Heart right ventricle (tissue), 16 donors: ENCODE measurements at regions of chr2 and their contacts with region 1.

Region 1: DNA sequence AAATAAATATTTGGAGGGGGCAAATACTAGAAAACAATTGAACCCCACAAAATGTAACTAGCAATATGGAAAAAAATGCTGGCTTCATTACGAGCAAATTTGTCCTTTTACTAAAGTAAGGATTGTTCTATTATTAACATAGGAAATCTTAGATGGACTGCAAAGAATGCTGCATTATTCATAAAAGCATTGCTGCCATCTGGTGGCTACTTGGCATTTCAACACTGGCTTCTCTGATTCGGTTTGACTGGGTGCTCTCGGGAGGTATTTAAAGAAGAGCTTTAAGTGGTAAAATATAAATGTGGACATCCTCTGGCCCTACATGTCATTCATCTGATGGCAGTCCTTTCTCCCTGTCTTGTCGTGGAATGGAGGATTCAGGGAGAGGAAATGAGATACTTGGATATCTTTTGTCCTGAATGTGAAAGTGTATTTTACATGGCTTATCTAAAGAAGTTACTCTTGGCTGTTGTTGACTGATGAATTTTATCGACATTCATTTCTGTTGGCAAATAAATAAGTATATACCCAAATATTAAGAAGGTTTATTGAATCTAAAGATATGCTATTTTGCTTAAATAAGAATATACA is 130.2 kb downstream of the ARHGAP15 start:
- DNase-seq: peak in 1 of 2 donors; percentile 61
- ATAC-seq: peak in 4 of 8 donors; percentile 61 to 81 (median 68)
- H3K4me3 ChIP-seq: peak overlapping the region in 1 of 10 donors; percentile 6
- H3K27ac ChIP-seq: peak overlapping the region in 1 of 10 donors; percentile 63
- H3K4me1 ChIP-seq: peaks cover 0 to 36% (median 0%) of the 10 kb centered on the region in 9 donors
- H3K27me3 ChIP-seq: peaks cover 0 to 3% (median 0%) of the 10 kb centered on the region in 7 donors
- CTCF ChIP-seq: peak; percentile 30 to 80 (median 70)

Region 2: DNA sequence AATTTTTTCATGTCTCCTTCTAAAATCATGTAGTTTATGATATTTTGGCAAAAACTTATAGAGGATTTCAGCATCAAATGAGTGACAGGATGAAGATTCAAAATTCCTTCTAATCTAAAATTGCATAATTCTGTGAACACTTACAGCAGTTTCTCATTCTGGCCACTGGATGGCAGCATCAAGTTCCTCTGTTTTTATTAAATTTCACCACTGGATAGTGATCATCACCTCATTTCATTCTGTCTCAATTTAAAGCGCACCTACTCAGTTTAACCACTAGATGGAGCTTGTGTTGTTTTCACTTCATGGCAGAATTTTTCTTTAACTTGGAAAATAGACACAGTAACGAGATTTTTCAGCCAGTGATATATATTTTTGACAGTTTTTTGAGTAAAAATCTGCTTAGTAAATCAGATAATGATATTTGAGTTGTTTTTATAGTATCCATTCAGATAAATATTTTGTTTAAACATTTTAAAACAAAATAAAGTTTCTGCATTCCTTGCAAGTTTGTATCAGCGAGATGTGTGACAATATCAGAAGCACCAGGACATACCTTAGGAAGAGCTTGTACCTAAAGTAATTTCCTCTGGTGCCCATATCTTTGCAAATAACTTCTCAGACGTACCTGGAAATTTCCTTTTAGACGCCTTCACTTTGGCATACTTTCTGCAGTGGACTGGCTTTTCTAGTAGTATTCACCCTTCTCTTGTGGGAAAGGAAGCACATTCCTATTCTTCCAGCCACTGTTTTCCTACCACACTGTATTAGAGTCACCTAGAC is 225.0 kb before region 1 on chr2:
- intact Hi-C with region 1: loop called in 3 of 10 experiments (anchors 5 to 10 kb)
- DNase-seq: peak in 1 of 2 donors; percentile 52
- ATAC-seq: peak in 7 of 8 donors; percentile 55 to 79 (median 70)
- H3K4me3 ChIP-seq: no peak overlapping the region
- H3K27ac ChIP-seq: no peak overlapping the region
- H3K4me1 ChIP-seq: no peaks in the 10 kb centered on the region
- H3K27me3 ChIP-seq: peaks cover 0 to 7% (median 0%) of the 10 kb centered on the region in 7 donors
- CTCF ChIP-seq: peak; percentile 81 to 99 (median 97)

Region 3: DNA sequence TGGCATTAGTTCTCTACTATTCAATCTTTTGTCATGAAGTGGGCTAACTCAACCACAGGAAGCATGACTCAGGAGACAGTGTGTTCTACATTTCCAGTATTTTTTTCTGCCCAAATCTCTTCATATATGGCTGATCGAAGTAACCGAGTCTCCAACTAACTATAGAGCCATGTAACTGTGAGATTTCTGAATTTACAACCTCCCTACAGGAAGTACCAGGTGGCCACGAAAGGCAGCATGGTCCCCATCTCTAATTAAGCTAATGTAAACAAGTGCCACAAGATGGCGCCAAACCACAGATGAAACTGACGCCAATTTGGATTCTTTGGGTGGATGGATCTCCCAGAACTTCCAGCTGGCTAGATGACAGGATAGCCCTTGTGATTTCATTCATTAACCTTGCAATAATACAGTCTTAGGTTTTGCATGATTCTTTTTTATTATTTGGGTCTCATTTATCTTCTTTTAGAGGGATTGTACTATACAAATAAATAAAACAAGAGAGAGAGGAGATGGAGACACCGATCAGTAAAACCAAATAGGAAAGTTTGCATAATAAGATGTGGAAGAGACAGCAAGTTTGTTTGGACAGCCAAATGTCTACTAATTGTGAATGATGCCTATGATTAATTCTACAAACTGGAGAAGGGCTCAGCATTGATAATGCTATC is 148.6 kb before region 1 on chr2:
- intact Hi-C with region 1: loop called in 6 of 10 experiments (anchors 2 to 10 kb)
- DNase-seq: peak; percentile 14 to 58
- ATAC-seq: peak in 6 of 8 donors; percentile 37 to 70 (median 48)
- H3K4me3 ChIP-seq: no peak overlapping the region
- H3K27ac ChIP-seq: no peak overlapping the region
- H3K4me1 ChIP-seq: peaks cover 0 to 6% (median 0%) of the 10 kb centered on the region in 9 donors
- H3K27me3 ChIP-seq: no peaks in the 10 kb centered on the region
- CTCF ChIP-seq: peak; percentile 20 to 77 (median 62)

Region 4: DNA sequence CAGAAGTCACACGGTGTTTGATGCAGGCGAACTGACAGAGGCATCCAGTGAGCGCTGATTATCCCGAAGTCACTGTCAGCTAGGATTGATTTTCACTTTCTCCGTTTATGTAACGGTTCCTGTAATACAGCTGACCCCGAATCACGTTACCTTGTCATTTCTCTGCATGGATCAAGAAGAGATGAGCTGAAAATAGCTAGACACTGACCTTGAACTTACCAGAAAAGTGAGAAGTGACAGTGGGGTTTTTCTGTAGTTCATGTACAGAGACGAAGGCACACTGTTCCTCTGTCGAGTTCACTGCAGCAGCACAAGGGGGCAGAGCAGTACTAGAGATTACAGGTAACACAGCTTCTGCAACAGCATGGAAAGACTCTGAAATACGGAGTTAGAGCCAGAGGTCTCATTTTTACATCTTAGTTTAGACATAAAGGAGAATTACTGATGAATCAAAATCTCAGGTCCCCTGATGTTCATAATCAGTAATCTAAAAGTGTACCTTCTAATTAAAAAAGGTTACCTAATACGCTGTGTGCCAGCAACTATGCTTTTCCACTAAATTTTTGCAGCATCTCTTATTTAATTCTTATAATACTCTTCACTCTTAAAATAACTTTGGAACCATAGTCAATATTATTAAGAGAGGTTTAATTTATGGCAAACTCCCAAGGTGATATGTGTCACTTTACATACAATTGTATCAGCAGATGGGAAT is 97.2 kb before region 1 on chr2:
- intact Hi-C with region 1: loop called in 2 of 10 experiments (anchors 5 to 10 kb)
- DNase-seq: peak in 1 of 2 donors; percentile 6
- ATAC-seq: peak in 6 of 8 donors; percentile 38 to 64 (median 55)
- H3K4me3 ChIP-seq: no peak overlapping the region
- H3K27ac ChIP-seq: no peak overlapping the region
- H3K4me1 ChIP-seq: peaks cover 0 to 29% (median 0%) of the 10 kb centered on the region in 9 donors
- H3K27me3 ChIP-seq: no peaks in the 10 kb centered on the region
- CTCF ChIP-seq: peak in 7 of 9 donors; percentile 32 to 61 (median 50)

Region 5: GRCh38 chr2:143205106-143205764 is 54.2 kb before region 1 on chr2:
- intact Hi-C with region 1: loop called in 1 of 10 experiments (anchors 10 kb)
- DNase-seq: no peak
- ATAC-seq: no peak
- H3K4me3 ChIP-seq: no peak overlapping the region
- H3K27ac ChIP-seq: no peak overlapping the region
- H3K4me1 ChIP-seq: no peaks in the 10 kb centered on the region
- H3K27me3 ChIP-seq: no peaks in the 10 kb centered on the region
- CTCF ChIP-seq: peak in 6 of 9 donors; percentile 23 to 40 (median 31)

Region 6: GRCh38 chr2:143779021-143779420 is 519.6 kb after region 1 on chr2:
- intact Hi-C with region 1: no loop called
- DNase-seq: no peak
- ATAC-seq: no peak
- H3K4me3 ChIP-seq: no peak overlapping the region
- H3K27ac ChIP-seq: no peak overlapping the region
- H3K4me1 ChIP-seq: no peaks in the 10 kb centered on the region
- H3K27me3 ChIP-seq: no peaks in the 10 kb centered on the region
- CTCF ChIP-seq: no peak